ENCODE measurements at regions of chr2 and their contacts with region 1.

Region 1: DNA sequence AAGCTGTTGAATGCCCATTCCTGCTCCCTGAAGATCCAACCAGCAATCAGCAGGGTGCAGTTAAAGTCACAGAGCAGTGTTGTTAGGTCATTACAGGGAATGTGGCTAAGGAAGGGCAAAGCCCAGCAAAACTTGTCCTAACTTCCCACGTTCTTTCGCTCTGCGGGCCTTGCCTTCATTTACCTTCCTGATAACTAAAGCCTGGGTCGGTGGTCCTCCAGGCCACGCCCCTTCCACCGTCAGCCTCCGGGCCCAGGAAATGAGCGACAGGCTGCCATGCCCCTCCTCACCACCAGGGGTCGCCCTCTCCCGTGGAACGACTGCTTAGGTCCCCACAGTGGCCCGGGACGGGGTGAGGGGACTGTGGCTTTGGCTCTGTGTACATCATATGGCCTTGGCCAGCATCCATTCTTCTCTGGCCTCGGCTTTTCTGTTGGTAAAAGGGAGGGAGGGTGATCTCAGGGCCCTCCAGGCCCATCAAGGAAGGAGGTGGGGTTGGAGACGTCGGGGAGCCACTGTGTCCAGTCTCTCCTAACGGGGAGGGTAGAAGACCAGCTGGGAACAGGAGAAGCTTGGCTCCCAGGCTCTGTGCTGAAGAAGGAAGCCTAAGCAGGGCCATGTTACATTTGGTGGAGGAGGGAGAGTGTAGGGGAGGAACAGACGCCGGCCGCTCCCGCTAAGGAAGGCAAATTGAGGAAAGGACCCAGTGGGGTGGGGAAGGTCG is 2.2 kb downstream of the SH2D6 start:
- DNase-seq: peak; percentile 81 to 87 (median 81)
- H3K4me3 ChIP-seq: no peak overlapping the region
- H3K4me3 Mint-ChIP-seq: peak overlapping the region; percentile 72 to 84 (median 78)
- H3K27ac ChIP-seq: peak overlapping the region; percentile 12
- H3K27ac Mint-ChIP-seq: peak overlapping the region; percentile 76 to 93 (median 90)
- H3K4me1 ChIP-seq: peaks cover 28% of the 10 kb centered on the region
- H3K4me1 Mint-ChIP-seq: peaks cover 12 to 29% (median 19%) of the 10 kb centered on the region in 4 donors
- H3K27me3 ChIP-seq: no peaks in the 10 kb centered on the region
- H3K27me3 Mint-ChIP-seq: no peaks in the 10 kb centered on the region

Region 2: GRCh38 chr2:85354286-85355072 is 66.2 kb before region 1 on chr2 and contains the starts of genes ELMOD3 and RETSAT:
- CTCF ChIA-PET with region 1: interaction called, 4 read pairs
- POLR2A ChIA-PET with region 1: interaction called, 22 read pairs
- intact Hi-C with region 1: loop called (anchors 1 kb)
- DNase-seq: peak; percentile 98 to 99 (median 99)
- H3K4me3 ChIP-seq: peak within 1 kb of the TSS; percentile 64 to 81
- H3K4me3 Mint-ChIP-seq: peak within 1 kb of the TSS; percentile 97 to 100 (median 99)
- H3K27ac ChIP-seq: peak within 1 kb of the TSS; percentile 94
- H3K27ac Mint-ChIP-seq: peak within 1 kb of the TSS; percentile 94 to 100 (median 99)
- H3K4me1 ChIP-seq: peaks cover 44% of the 10 kb centered on the region
- H3K4me1 Mint-ChIP-seq: peaks cover 28 to 74% (median 57%) of the 10 kb centered on the region in 4 donors
- H3K27me3 ChIP-seq: no peaks in the 10 kb centered on the region
- H3K27me3 Mint-ChIP-seq: no peaks in the 10 kb centered on the region
- total RNA-seq, gene ELMOD3: 29.8 to 33.2 TPM
- total RNA-seq, gene RETSAT: 33.0 to 33.4 TPM

Region 3: GRCh38 chr2:85409845-85410583 is 10.7 kb before region 1 on chr2 and contains the start of gene CAPG:
- CTCF ChIA-PET with region 1: interaction called, 30 read pairs
- POLR2A ChIA-PET with region 1: interaction called, 15 read pairs
- intact Hi-C with region 1: loop called (anchors 1 kb)
- DNase-seq: peak in 2 of 5 donors; percentile 25 to 34
- H3K4me3 ChIP-seq: peak within 1 kb of the TSS; percentile 47 to 58
- H3K4me3 Mint-ChIP-seq: peak within 1 kb of the TSS; percentile 86 to 90 (median 88)
- H3K27ac ChIP-seq: peak within 1 kb of the TSS; percentile 55
- H3K27ac Mint-ChIP-seq: peak within 1 kb of the TSS; percentile 54 to 92 (median 85)
- H3K4me1 ChIP-seq: peaks cover 62% of the 10 kb centered on the region
- H3K4me1 Mint-ChIP-seq: peaks cover 36 to 52% (median 44%) of the 10 kb centered on the region in 4 donors
- H3K27me3 ChIP-seq: no peaks in the 10 kb centered on the region
- H3K27me3 Mint-ChIP-seq: no peaks in the 10 kb centered on the region
- total RNA-seq, gene CAPG: 25.6 to 38.5 TPM

Region 4: DNA sequence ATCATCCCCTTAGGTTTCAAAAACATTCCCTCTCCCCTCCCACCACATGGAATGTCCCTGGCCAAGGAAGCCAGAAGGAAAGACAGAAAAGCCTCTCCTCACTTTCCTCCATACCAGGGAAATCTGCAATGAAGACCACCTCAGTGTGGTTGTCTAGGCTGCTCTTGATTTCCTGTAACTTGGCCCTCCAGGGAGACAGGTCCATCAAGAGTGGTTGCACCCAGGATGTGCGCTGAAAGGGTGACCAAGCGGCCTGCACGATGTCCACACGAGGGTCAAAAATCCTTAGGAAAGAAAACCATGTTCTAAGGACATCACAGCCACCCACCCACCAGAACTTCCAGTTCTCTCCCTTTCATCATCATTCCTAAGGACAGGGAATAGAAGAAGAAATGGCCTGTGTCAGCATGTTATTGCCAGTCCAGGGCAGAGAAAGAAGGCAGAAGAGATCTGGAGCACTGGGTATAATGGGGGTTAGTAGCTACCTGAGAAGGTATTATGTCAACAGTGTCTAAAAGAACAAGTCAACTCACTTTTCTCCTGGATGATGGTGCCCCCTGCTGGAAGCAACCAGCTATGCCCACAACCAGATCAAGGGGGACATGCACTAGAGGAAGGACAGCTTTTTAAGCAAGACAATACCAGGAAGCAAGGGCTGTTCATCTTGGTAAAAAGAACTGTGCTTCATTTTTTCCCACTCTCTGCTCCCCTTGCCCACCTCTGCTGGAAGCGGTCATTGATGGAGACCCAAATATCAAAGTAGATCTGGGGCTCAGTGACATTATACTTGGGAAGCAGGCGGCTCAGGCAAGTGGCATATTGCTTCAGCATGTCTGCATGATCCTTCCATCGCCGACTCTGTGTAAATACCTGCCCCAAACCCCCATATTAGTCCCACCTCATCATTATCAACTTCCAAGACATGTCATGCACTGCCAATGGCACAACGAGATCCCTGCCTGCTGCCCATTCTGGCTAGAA is 131.3 kb after region 1 on chr2:
- CTCF ChIA-PET with region 1: interaction called, 378 read pairs
- POLR2A ChIA-PET with region 1: interaction called, 92 read pairs
- intact Hi-C with region 1: loop called (anchors 1 kb)
- DNase-seq: peak; percentile 86 to 90 (median 87)
- H3K4me3 ChIP-seq: no peak overlapping the region
- H3K4me3 Mint-ChIP-seq: no peak overlapping the region
- H3K27ac ChIP-seq: no peak overlapping the region
- H3K27ac Mint-ChIP-seq: peak overlapping the region; percentile 22 to 70 (median 47)
- H3K4me1 ChIP-seq: no peaks in the 10 kb centered on the region
- H3K4me1 Mint-ChIP-seq: peaks cover 0 to 7% (median 4%) of the 10 kb centered on the region in 4 donors
- H3K27me3 ChIP-seq: no peaks in the 10 kb centered on the region
- H3K27me3 Mint-ChIP-seq: no peaks in the 10 kb centered on the region

Region 5: GRCh38 chr2:85628658-85629057 is 208.0 kb after region 1 on chr2:
- CTCF ChIA-PET with region 1: no interaction called
- POLR2A ChIA-PET with region 1: no interaction called
- intact Hi-C with region 1: no loop called
- DNase-seq: no peak
- H3K4me3 ChIP-seq: no peak overlapping the region
- H3K4me3 Mint-ChIP-seq: no peak overlapping the region
- H3K27ac ChIP-seq: no peak overlapping the region
- H3K27ac Mint-ChIP-seq: peak overlapping the region in 2 of 7 donors; percentile 4 to 46
- H3K4me1 ChIP-seq: peaks cover 6% of the 10 kb centered on the region
- H3K4me1 Mint-ChIP-seq: peaks cover 0 to 12% (median 3%) of the 10 kb centered on the region in 4 donors
- H3K27me3 ChIP-seq: no peaks in the 10 kb centered on the region
- H3K27me3 Mint-ChIP-seq: no peaks in the 10 kb centered on the region

Region 6: GRCh38 chr2:85642725-85643124 is 222.0 kb after region 1 on chr2:
- CTCF ChIA-PET with region 1: interaction called, 10 read pairs
- POLR2A ChIA-PET with region 1: no interaction called
- intact Hi-C with region 1: loop called (anchors 1 kb)
- DNase-seq: peak in 1 of 5 donors; percentile 8
- H3K4me3 ChIP-seq: no peak overlapping the region
- H3K4me3 Mint-ChIP-seq: peak overlapping the region in 4 of 8 donors; percentile 2 to 52 (median 23)
- H3K27ac ChIP-seq: no peak overlapping the region
- H3K27ac Mint-ChIP-seq: peak overlapping the region; percentile 6 to 90 (median 57)
- H3K4me1 ChIP-seq: no peaks in the 10 kb centered on the region
- H3K4me1 Mint-ChIP-seq: peaks cover 6 to 13% (median 10%) of the 10 kb centered on the region in 4 donors
- H3K27me3 ChIP-seq: no peaks in the 10 kb centered on the region
- H3K27me3 Mint-ChIP-seq: no peaks in the 10 kb centered on the region